Activated CD4-positive, alpha-beta T cell treated with anti-CD3 and anti-CD28 coated beads, Interleukin-2, amount 10 ng/mL, durations not matched to agents 24 days and 14 days (primary cell): ENCODE measurements at regions of chr7 and their contacts with region 1.

Region 1: DNA sequence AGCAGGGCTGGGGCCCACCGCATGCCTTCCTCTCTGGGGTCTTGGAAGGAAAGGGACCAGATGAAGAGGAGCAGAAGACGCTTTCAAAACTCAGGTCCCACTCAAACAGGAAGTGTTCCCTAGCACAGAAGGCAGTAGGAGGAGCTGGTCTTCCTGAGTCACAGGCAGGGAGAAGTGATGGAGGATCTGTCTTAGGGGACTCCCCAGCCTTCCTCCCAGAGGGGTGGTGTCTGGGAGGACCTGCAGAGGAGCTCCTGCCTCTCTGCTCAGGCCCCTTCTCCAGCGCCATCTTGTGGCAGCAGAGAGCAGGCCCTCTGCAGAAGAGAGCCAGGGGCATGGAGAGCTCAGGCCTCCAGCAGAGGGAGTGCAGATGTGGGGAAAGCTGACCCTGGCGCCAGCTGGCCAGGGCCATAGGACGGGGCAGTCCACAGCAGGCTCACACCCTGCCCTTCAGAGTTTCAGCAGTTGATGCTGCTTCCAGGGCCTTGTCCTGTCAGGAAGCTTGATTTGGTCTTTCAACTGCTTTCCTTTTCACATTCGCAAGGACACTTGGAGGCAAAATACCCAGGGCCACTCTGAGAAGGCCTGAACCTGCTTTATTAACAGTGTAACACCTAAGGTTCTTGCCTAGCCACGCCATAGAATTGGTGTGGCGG is 62.2 kb upstream of the TARP start:
- DNase-seq: peak; percentile 94
- H3K4me3 Mint-ChIP-seq: peak overlapping the region; percentile 71
- H3K27ac Mint-ChIP-seq: peak overlapping the region; percentile 74
- H3K4me1 Mint-ChIP-seq: peaks cover 37% of the 10 kb centered on the region
- H3K27me3 Mint-ChIP-seq: no peaks in the 10 kb centered on the region

Region 2: GRCh38 chr7:38107486-38107893 is 228.1 kb before region 1 on chr7:
- intact Hi-C with region 1: loop called (anchors 1 kb)
- DNase-seq: peak; percentile 90
- H3K4me3 Mint-ChIP-seq: no peak overlapping the region
- H3K27ac Mint-ChIP-seq: no peak overlapping the region
- H3K4me1 Mint-ChIP-seq: no peaks in the 10 kb centered on the region
- H3K27me3 Mint-ChIP-seq: peaks cover 40% of the 10 kb centered on the region

Region 3: GRCh38 chr7:38215735-38216670 is 119.6 kb before region 1 on chr7:
- intact Hi-C with region 1: loop called (anchors 1 kb)
- DNase-seq: peak; percentile 92
- H3K4me3 Mint-ChIP-seq: no peak overlapping the region
- H3K27ac Mint-ChIP-seq: no peak overlapping the region
- H3K4me1 Mint-ChIP-seq: peaks cover 38% of the 10 kb centered on the region
- H3K27me3 Mint-ChIP-seq: no peaks in the 10 kb centered on the region

Region 4: DNA sequence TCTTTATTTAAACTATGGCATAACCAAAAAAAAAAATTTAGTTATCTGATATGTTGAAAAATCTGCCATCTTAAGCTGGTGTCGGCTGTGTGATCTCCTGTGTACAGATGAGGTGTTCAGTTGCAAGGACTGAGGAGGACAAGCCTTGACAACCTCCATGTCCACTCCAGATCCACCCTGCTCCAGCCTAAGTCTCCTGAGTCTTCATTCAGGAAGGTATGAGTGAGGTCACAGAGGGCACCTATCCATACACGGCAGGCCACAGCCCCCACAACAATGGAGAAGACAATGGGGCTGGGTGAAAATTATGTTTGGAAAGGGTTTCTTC is 78.3 kb before region 1 on chr7:
- intact Hi-C with region 1: loop called (anchors 2 kb)
- DNase-seq: no peak
- H3K4me3 Mint-ChIP-seq: no peak overlapping the region
- H3K27ac Mint-ChIP-seq: no peak overlapping the region
- H3K4me1 Mint-ChIP-seq: no peaks in the 10 kb centered on the region
- H3K27me3 Mint-ChIP-seq: no peaks in the 10 kb centered on the region

Region 5: DNA sequence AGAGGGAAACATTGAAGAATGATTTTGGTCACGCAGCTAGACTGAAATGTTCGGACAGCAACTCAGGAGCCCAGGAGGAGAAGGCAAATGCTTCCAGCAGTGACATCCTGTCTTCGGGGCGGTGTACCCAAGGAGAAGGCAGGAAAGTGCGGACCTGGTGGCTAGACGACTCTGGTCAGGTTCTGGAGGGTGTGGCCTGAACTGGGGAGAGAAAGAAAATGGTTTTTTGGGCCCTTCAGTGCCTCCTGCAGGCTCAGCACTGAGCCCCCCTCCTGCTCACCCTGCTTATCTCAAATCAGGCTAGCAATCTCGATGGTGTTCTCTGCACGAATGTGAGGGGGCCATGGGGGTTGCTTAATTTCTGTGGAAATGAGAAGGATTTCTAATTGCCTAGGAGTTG is 35.4 kb before region 1 on chr7:
- intact Hi-C with region 1: loop called (anchors 2 kb)
- DNase-seq: no peak
- H3K4me3 Mint-ChIP-seq: peak overlapping the region; percentile 79
- H3K27ac Mint-ChIP-seq: peak overlapping the region; percentile 66
- H3K4me1 Mint-ChIP-seq: peaks cover 2% of the 10 kb centered on the region
- H3K27me3 Mint-ChIP-seq: no peaks in the 10 kb centered on the region

Region 6: DNA sequence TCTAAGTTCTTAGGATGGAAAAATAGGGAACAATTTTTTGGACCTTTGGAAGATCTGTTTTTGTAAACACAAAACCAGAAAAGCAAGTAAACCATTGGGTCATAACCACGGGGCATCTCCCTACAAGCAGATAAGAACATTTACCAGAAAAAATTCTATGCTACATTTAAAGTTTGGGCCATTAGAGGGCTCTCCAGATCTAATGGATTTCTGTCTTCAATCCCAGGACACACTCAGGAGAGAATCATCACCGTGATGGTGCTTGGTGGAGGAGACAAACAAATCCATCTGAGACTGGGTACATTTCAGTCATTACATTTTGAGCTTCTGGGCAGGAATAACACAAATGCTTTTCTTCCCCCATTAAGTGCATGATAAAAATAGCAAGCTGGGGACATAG is 116.2 kb after region 1 on chr7:
- intact Hi-C with region 1: no loop called
- DNase-seq: peak; percentile 40
- H3K4me3 Mint-ChIP-seq: no peak overlapping the region
- H3K27ac Mint-ChIP-seq: no peak overlapping the region
- H3K4me1 Mint-ChIP-seq: no peaks in the 10 kb centered on the region
- H3K27me3 Mint-ChIP-seq: peaks cover 12% of the 10 kb centered on the region